ENCODE measurements at regions of chr2 and their contacts with region 1.

Region 1: DNA sequence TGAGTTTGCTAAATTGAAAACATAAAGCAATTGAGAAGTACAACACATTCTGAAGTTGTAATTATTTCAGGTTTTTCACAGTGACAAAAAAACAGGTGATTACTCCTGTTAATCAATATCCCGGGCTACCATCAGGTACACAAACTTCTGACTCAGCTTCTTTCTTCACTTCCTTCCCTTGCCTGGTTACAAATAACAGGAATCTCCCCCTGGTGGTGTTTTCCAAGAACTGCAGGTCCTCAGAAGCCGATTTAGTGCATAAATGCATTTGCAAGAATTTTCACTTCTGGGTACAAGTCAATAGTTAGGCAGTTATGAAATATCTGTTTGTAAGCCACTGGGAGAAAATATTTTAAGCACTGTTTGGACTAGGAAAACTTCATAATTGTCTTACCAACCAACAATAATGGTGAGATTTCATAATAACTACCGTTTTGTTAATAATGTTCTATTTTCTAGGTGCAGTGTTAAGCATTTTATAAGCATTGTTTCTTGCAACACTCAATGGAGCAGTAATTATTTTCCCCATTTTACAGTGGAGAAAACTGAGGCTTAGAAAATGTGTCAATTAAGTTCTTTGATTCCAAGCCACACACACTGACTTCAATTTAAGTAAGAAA is 12.4 kb upstream of the GMCL1 start:
- DNase-seq: peak; percentile 89 to 94 (median 92)
- H3K4me3 ChIP-seq: no peak overlapping the region
- H3K27ac ChIP-seq: no peak overlapping the region
- H3K4me1 ChIP-seq: peaks cover 4 to 11% (median 6%) of the 10 kb centered on the region in 4 experiments
- H3K27me3 ChIP-seq: no peaks in the 10 kb centered on the region

Region 2: GRCh38 chr2:69464575-69464974 is 352.5 kb before region 1 on chr2:
- CTCF ChIA-PET with region 1: no interaction called
- POLR2A ChIA-PET with region 1: no interaction called
- DNase-seq: no peak
- H3K4me3 ChIP-seq: no peak overlapping the region
- H3K27ac ChIP-seq: no peak overlapping the region
- H3K4me1 ChIP-seq: no peaks in the 10 kb centered on the region
- H3K27me3 ChIP-seq: no peaks in the 10 kb centered on the region

Region 3: DNA sequence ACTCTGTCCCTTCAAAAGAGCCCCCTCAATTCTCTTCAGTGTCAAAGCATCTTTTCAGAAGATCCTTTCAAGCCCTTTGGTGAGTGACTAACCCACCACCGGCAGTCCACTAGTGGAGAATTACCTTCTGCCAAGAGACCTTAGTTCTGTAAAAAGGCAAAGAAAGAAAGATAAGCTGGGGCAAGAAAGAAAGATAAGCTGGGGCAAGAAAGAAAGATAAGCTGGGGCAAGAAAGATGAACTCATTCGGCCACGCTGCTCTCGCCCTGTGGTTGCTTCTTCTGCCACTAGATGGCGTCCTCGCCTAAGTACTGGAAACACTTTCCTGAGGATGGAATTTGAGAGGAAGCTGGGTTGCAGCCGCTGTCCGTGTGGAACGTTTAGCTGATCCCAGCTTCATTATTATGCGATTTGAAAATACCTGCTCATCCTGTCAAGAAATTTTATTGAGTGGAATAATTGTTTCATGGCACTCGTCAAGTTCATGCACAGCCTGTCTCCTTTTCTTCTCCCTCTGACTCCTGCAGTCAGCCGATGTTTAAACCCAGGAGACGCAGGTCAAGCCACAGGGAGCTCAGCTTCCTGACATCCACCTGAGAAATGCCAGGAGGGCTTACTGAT is 92.4 kb before region 1 on chr2:
- CTCF ChIA-PET with region 1: interaction called, 164 read pairs
- POLR2A ChIA-PET with region 1: no interaction called
- DNase-seq: peak; percentile 71 to 86 (median 77)
- H3K4me3 ChIP-seq: peak overlapping the region in 6 of 7 experiments; percentile 55 to 69 (median 59)
- H3K27ac ChIP-seq: no peak overlapping the region
- H3K4me1 ChIP-seq: peaks cover 0 to 8% (median 2%) of the 10 kb centered on the region in 4 experiments
- H3K27me3 ChIP-seq: no peaks in the 10 kb centered on the region

Region 4: DNA sequence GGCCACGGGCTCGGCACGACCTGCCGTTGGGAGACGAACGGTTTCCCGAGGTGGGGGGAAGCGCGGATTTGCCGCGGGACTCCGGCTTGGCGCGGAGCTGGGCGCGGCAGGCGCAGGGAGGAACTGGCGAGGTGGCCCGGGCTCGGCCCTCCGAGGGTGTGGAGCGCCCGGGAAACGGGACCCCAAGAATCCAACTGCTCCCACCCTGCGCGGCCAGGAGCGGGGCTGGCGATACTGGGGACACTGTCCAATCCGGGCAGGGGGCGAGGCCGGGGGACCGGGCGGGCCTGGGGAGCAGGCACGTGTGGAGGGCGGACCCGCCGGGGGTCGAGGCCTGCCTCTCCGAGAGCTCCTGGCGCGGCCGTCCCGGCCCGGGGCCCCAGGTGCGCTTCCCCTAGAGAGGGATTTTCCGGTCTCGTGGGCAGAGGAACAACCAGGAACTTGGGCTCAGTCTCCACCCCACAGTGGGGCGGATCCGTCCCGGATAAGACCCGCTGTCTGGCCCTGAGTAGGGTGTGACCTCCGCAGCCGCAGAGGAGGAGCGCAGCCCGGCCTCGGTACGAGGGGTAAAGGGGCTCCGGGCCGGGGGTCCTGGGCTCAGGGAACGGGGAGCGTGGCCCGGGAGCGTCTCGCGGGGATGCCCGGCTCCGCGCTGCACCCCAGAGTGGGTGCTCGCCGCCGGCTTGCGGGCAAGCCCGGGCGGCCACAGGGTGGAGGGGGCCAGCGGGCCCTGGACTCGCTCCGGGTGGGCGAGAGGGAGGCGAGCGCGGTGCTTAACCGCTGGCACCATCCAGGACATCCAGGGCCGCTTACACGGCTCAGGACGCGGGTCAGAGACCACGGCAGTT is 75.2 kb before region 1 on chr2 and contains the start of gene ANXA4:
- CTCF ChIA-PET with region 1: interaction called, 13 read pairs
- POLR2A ChIA-PET with region 1: interaction called, 3 read pairs
- DNase-seq: peak; percentile 42 to 59 (median 53)
- H3K4me3 ChIP-seq: peak within 1 kb of the TSS; percentile 71 to 95 (median 76)
- H3K27ac ChIP-seq: peak within 1 kb of the TSS; percentile 54 to 71
- H3K4me1 ChIP-seq: peaks cover 2 to 26% (median 17%) of the 10 kb centered on the region in 4 experiments
- H3K27me3 ChIP-seq: no peaks in the 10 kb centered on the region

Region 5: DNA sequence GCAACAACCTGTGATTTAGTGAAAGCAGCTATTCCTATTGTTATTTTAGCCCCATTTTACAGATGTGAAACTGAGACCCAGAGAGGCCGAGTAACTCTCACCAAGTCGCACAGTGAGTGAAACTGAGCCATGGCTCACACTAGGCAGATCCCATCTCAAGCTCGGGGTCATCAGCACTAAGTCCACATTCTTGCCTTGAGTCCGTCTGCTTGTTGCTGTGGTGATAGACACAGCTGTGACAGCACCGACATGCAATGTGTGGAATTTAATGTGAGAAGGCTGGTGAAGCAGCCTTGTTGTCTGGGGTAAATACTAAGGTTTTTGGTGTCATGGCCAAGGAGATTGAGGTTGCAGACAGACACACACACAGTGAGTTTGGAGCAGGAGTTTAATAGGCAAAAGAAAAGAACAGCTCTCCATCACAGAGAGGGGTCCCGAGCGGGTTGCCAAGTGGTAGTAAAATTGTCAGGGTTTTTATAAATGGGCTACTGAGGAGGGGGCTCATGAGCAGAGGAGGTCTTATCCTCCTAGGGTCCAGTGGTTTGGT is 27.8 kb before region 1 on chr2:
- CTCF ChIA-PET with region 1: interaction called, 29 read pairs
- POLR2A ChIA-PET with region 1: no interaction called
- DNase-seq: no peak
- H3K4me3 ChIP-seq: peak overlapping the region in 1 of 7 experiments; percentile 21
- H3K27ac ChIP-seq: peak overlapping the region in 1 of 2 experiments; percentile 84
- H3K4me1 ChIP-seq: peaks cover 10 to 20% (median 16%) of the 10 kb centered on the region in 4 experiments
- H3K27me3 ChIP-seq: no peaks in the 10 kb centered on the region

Region 6: DNA sequence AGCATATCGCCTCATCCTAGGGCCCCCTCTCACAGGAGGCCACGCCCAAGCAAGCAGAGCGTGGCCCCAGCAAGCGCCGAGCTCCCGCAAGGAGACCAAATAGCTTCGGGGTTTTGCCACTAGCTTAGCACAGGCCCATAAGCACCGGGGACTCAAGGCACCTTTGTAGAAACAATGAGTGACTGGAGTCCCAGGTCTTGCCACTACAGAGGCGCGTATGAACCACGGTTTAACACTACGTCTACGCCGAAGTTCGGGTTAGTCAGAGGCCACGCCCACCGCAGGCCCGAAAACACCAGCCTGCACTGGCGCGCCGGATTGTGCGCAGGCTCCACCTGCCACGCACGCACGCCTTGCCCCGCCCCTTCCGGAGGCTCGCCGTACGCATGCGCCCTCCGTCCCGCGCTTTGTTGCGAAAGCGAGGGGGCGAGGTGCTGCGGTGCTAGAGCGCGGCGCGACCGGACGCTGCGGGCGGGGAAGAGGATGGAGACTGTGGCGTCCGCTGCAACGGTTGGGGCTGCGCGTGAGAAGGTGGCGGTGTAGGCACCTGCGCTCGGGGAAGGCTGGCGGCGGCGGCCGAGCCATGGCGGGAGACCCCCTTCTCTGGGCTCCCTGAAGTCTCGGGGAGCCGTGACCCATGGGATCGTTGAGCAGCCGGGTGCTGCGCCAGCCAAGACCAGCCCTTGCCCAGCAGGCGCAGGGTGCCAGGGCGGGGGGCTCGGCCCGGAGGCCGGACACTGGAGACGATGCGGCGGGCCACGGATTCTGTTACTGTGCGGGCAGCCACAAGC is 12.4 kb after region 1 on chr2 and contains the start of gene GMCL1:
- CTCF ChIA-PET with region 1: interaction called, 34 read pairs
- POLR2A ChIA-PET with region 1: interaction called, 3 read pairs
- DNase-seq: peak; percentile 96 to 99 (median 99)
- H3K4me3 ChIP-seq: peak within 1 kb of the TSS; percentile 63 to 97 (median 90)
- H3K27ac ChIP-seq: peak within 1 kb of the TSS; percentile 90 to 94
- H3K4me1 ChIP-seq: peaks cover 8 to 33% (median 26%) of the 10 kb centered on the region in 4 experiments
- H3K27me3 ChIP-seq: no peaks in the 10 kb centered on the region

Measured in common myeloid progenitor, CD34-positive (primary cell).